WTC11 (cell line): ENCODE measurements at regions of chr11 and their contacts with region 1.

Region 1: DNA sequence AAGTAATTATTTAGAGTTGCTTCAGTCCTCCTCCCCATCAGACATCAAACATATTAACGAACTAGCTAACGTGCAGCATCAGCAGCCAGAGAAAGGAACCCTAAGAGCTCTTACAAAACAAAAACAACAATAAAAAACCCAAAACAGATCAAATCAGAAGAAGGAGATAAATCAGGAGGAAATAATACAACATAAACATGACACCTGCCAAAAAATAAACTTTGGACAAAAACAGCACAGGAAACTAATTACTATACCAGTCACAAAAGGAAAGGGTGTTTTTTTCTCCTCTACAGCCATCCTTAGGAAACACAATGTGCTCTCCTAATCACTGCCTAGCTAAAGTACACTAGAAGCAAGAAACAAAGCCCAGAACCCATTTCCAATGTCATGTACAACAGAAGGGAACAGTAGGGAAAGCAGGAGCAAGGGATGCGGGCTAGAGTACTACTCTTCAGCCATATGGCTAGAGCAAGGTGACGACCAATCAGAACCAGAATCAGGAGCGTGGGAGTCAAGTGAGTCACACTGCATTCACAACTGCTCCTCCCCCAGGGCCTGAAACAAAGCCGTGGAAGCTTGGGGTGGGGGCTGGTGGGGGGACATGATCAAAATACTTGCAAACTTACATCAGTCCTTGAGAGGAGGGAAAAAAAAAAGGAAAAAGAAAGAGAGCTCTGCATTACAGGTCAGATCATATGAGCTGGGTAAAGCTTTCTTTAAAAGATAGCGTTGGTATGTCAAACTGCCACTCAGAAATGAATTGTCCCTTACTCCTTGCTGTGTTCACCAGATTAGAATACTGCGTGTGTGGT is 60.4 kb downstream of the LARGE2 start:
- DNase-seq: peak; percentile 74
- ATAC-seq: peak; percentile 93
- H3K4me3 Mint-ChIP-seq: peak overlapping the region; percentile 43
- H3K27ac Mint-ChIP-seq: peak overlapping the region; percentile 94
- H3K4me1 Mint-ChIP-seq: peaks cover 29% of the 10 kb centered on the region
- H3K27me3 Mint-ChIP-seq: no peaks in the 10 kb centered on the region
- CTCF ChIP-seq: no peak

Region 2: GRCh38 chr11:45909594-45910475 is 73.0 kb before region 1 on chr11:
- CTCF ChIA-PET with region 1: no interaction called
- POLR2A ChIA-PET with region 1: no interaction called
- DNase-seq: no peak
- ATAC-seq: no peak
- H3K4me3 Mint-ChIP-seq: no peak overlapping the region
- H3K27ac Mint-ChIP-seq: no peak overlapping the region
- H3K4me1 Mint-ChIP-seq: no peaks in the 10 kb centered on the region; the same call in 1 of the 2 replicates
- H3K27me3 Mint-ChIP-seq: no peaks in the 10 kb centered on the region
- CTCF ChIP-seq: no peak

Region 3: GRCh38 chr11:45930031-45930794 is 52.6 kb before region 1 on chr11:
- CTCF ChIA-PET with region 1: no interaction called
- POLR2A ChIA-PET with region 1: interaction called, 11 read pairs
- DNase-seq: no peak
- ATAC-seq: no peak; the same call in 1 of the 2 replicates
- H3K4me3 Mint-ChIP-seq: no peak overlapping the region
- H3K27ac Mint-ChIP-seq: peak overlapping the region; percentile 60
- H3K4me1 Mint-ChIP-seq: no peaks in the 10 kb centered on the region; the same call in 1 of the 2 replicates
- H3K27me3 Mint-ChIP-seq: no peaks in the 10 kb centered on the region
- CTCF ChIP-seq: no peak

Region 4: GRCh38 chr11:45993531-45994001 is 10.7 kb after region 1 on chr11:
- CTCF ChIA-PET with region 1: interaction called, 31 read pairs
- POLR2A ChIA-PET with region 1: interaction called, 33 read pairs
- DNase-seq: no peak
- ATAC-seq: no peak
- H3K4me3 Mint-ChIP-seq: no peak overlapping the region
- H3K27ac Mint-ChIP-seq: peak overlapping the region; percentile 90
- H3K4me1 Mint-ChIP-seq: peaks cover 52% of the 10 kb centered on the region
- H3K27me3 Mint-ChIP-seq: no peaks in the 10 kb centered on the region
- CTCF ChIP-seq: no peak